PC-9 (cell line): ENCODE measurements at regions of chr10 and their contacts with region 1.

Region 1: GRCh38 chr10:121049489-121049888 is 198.3 kb downstream of the WDR11 start:
- DNase-seq: no peak
- H3K4me3 ChIP-seq: no peak overlapping the region
- H3K27ac ChIP-seq: no peak overlapping the region
- H3K4me1 ChIP-seq: no peaks in the 10 kb centered on the region
- H3K27me3 ChIP-seq: no peaks in the 10 kb centered on the region
- CTCF ChIP-seq: no peak

Region 2: DNA sequence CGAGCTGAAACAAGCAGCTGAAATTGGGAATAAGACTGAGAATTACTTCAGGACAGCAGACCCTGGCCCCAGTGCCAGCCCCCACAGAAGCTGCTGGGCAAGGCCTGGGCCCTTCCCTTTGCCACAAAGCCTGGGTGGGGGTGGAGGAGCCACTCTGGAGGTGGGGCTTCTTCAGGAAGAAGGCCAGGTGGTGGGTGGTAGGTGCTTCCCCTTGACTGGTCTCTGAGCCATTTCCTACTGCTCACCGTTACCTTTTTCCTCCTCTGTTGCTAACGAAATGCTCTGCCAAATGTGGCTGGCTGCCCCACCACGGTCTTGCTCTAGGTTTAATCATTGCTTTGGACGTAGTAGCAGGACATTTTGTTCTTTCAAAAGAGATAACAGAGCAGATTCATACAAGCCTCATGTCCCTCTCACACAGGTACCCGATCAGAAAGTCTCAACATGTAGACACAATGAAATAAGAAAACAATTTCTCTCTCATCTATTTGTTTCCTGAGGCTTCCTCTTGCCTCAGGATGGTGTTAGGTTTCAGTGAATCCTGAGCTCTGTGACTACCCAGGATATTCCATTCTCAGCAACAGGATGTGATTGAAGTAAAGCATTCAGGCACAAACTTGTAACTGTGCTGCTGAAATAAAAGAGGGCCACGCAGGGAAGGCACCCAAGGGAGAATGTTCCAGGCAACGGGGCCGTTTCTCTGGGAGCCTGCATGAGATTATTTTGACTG is 131.8 kb before region 1 on chr10:
- CTCF ChIA-PET with region 1: no interaction called
- POLR2A ChIA-PET with region 1: no interaction called
- intact Hi-C with region 1: no loop called
- DNase-seq: no peak
- H3K4me3 ChIP-seq: no peak overlapping the region
- H3K27ac ChIP-seq: no peak overlapping the region
- H3K4me1 ChIP-seq: no peaks in the 10 kb centered on the region
- H3K27me3 ChIP-seq: no peaks in the 10 kb centered on the region
- CTCF ChIP-seq: no peak

Region 3: GRCh38 chr10:121069061-121069850 is 19.8 kb after region 1 on chr10:
- CTCF ChIA-PET with region 1: no interaction called
- POLR2A ChIA-PET with region 1: no interaction called
- intact Hi-C with region 1: no loop called
- DNase-seq: no peak
- H3K4me3 ChIP-seq: no peak overlapping the region
- H3K27ac ChIP-seq: no peak overlapping the region
- H3K4me1 ChIP-seq: no peaks in the 10 kb centered on the region
- H3K27me3 ChIP-seq: no peaks in the 10 kb centered on the region; the same call in 1 of the 2 replicates
- CTCF ChIP-seq: no peak

Region 4: DNA sequence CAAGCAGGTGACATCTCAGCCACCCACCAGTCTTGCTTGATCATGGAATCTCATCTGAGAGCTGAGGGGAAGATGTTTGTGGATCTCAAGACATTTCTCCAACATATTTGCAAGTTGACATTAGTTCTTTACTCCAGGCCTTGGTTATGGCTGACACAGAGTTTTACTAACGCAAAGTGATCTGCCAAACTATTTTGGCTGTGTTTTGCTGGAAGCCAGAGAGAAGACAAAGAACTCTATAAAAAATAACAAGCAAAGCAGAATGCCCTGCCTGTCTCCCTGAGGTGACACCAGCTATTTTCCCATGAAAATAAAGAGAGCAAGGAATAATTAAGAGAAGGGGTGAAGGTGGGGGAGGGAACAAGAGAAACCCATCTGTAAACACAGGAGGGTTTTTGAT is 88.0 kb after region 1 on chr10:
- CTCF ChIA-PET with region 1: interaction called, 10 read pairs
- POLR2A ChIA-PET with region 1: no interaction called
- intact Hi-C with region 1: no loop called
- DNase-seq: no peak
- H3K4me3 ChIP-seq: no peak overlapping the region
- H3K27ac ChIP-seq: no peak overlapping the region
- H3K4me1 ChIP-seq: no peaks in the 10 kb centered on the region
- H3K27me3 ChIP-seq: no peaks in the 10 kb centered on the region
- CTCF ChIP-seq: no peak